OCI-LY7 (cell line): ENCODE measurements at regions of chr4 and their contacts with region 1.

Region 1: DNA sequence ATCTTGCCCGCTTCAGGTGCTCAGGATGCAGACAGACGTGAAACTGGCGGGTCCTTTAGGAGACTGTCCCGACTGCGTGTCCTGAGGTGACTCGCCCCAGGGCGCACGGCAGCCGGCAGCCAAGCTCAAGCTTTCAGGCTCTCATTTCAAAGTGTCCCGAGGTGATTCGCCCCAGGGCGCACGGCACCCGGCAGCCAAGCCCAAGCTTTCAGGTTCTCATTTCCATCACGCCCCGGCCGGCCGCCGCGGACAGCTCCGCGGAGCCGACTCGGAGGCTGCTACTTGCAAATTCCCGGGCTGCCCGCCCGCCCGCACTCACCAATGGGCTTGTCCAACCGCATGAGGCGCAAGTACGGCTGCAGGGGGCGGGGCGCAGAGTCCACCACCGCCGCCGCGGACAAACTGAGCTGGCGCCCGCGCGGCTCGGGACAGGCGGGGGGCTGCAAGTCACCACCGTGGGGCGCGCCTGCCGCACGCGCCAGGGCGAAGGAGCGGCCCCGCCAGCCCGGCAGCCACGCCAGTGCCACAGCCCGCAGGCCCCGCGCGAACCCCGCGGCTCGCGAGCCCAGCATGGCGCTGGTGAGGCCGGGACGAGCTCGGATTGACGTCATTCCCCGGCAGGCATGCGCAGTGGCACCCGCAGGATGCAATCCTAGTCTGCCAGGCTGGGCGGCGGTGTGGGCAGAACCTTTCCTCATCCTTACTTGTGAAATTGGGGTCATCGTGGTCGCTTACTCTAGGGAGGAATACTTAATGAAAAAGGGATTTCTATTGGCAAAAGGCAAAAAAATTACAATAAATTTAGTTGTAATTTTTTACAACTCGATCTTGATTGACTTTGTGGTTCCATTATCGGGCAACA is at the start of gene COQ2:
- DNase-seq: peak; percentile 94
- H3K4me3 ChIP-seq: peak within 1 kb of the TSS; percentile 81
- H3K27ac ChIP-seq: peak within 1 kb of the TSS; percentile 58
- H3K4me1 ChIP-seq: peaks cover 40% of the 10 kb centered on the region
- CTCF ChIP-seq: peak; percentile 61
- total RNA-seq, gene COQ2: 12.1 and 12.8 TPM in 2 replicates

Region 2: GRCh38 chr4:82890901-82891706 is 393.3 kb before region 1 on chr4 and contains the start of gene SEC31A:
- CTCF ChIA-PET with region 1: no interaction called
- POLR2A ChIA-PET with region 1: no interaction called
- intact Hi-C with region 1: loop called (anchors 5 kb)
- DNase-seq: peak; percentile 97
- H3K4me3 ChIP-seq: peak within 1 kb of the TSS; percentile 80
- H3K27ac ChIP-seq: peak within 1 kb of the TSS; percentile 84
- H3K4me1 ChIP-seq: peaks cover 53% of the 10 kb centered on the region
- CTCF ChIP-seq: peak; percentile 44
- total RNA-seq, gene SEC31A: 80.0 and 93.4 TPM in 2 replicates

Region 3: DNA sequence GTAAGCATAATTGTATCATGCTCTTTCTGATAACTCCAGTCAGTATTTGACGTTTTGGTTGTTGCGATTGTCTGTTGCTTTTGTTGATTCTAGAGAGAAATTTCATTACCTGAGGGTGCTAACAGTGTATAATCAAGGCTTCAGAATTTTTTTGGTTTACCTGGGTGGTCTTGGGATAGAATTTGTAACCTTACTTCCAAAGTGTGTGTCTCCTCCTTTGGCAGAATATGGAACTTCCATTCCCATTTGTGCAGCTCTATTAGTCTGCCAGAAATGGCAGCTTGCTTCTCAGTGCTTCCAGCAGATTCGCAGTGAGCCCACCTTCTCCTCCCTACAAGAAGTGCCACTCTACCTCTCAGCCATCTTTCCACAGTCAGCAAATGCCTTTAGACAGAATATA is 244.2 kb before region 1 on chr4:
- CTCF ChIA-PET with region 1: interaction called, 3 read pairs
- POLR2A ChIA-PET with region 1: interaction called, 16 read pairs
- intact Hi-C with region 1: loop called (anchors 1 kb)
- DNase-seq: no peak
- H3K4me3 ChIP-seq: no peak overlapping the region
- H3K27ac ChIP-seq: no peak overlapping the region
- H3K4me1 ChIP-seq: peaks cover 28% of the 10 kb centered on the region
- CTCF ChIP-seq: no peak

Region 4: DNA sequence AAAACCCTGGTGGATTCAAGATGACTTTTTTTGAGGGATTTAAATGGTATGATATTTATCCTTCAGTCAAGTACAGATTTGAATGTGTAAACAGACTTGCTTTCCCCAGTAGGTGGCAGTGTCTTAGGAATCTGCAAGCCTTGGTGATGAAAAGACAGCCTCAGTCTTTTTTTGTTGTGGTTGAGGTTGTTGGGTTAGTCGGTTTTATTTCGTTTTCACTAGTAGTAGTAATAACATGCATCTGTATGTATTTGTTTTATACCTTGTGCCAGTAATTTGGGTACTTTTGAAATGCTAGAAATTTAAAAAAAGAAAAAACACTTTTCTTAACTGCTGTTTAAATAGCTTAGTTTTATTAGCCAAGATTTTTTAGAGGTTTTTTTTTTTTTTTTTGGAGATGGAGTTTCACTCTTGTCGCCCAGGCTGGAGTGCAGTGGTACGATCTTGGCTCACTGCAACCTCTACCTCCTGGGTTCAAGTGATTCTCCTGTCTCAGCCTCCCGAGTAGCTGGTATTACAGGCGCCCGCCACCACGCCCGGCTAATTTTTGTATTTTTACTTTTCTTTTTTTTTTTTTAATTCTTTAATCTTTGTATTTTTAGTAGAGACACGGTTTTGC is 210.2 kb before region 1 on chr4:
- CTCF ChIA-PET with region 1: no interaction called
- POLR2A ChIA-PET with region 1: interaction called, 6 read pairs
- intact Hi-C with region 1: loop called (anchors 1 kb)
- DNase-seq: peak; percentile 86
- H3K4me3 ChIP-seq: no peak overlapping the region
- H3K27ac ChIP-seq: no peak overlapping the region
- H3K4me1 ChIP-seq: no peaks in the 10 kb centered on the region
- CTCF ChIP-seq: peak; percentile 94

Region 5: GRCh38 chr4:83334425-83335241 is 50.2 kb after region 1 on chr4 and contains the start of gene HPSE:
- CTCF ChIA-PET with region 1: no interaction called
- POLR2A ChIA-PET with region 1: no interaction called
- intact Hi-C with region 1: no loop called
- DNase-seq: peak; percentile 72
- H3K4me3 ChIP-seq: peak within 1 kb of the TSS; percentile 64
- H3K27ac ChIP-seq: no peak within 1 kb of the TSS
- H3K4me1 ChIP-seq: peaks cover 16% of the 10 kb centered on the region
- CTCF ChIP-seq: no peak
- total RNA-seq, gene HPSE: 1.8 and 3.1 TPM in 2 replicates

Region 6: GRCh38 chr4:83387753-83388676 is 103.6 kb after region 1 on chr4:
- CTCF ChIA-PET with region 1: no interaction called
- POLR2A ChIA-PET with region 1: interaction called, 10 read pairs
- intact Hi-C with region 1: no loop called
- DNase-seq: peak; percentile 63
- H3K4me3 ChIP-seq: no peak overlapping the region
- H3K27ac ChIP-seq: no peak overlapping the region
- H3K4me1 ChIP-seq: peaks cover 26% of the 10 kb centered on the region
- CTCF ChIP-seq: peak; percentile 44; the same call in 1 of the 2 replicates

Region 7: GRCh38 chr4:83582289-83582769 is 297.9 kb after region 1 on chr4:
- CTCF ChIA-PET with region 1: no interaction called
- POLR2A ChIA-PET with region 1: interaction called, 3 read pairs
- intact Hi-C with region 1: loop called (anchors 2 kb)
- DNase-seq: peak; percentile 58
- H3K4me3 ChIP-seq: peak overlapping the region; percentile 11
- H3K27ac ChIP-seq: peak overlapping the region; percentile 14
- H3K4me1 ChIP-seq: peaks cover 12% of the 10 kb centered on the region
- CTCF ChIP-seq: peak; percentile 72